PC-9 (cell line): ENCODE measurements at regions of chr5 and their contacts with region 1.

Region 1: DNA sequence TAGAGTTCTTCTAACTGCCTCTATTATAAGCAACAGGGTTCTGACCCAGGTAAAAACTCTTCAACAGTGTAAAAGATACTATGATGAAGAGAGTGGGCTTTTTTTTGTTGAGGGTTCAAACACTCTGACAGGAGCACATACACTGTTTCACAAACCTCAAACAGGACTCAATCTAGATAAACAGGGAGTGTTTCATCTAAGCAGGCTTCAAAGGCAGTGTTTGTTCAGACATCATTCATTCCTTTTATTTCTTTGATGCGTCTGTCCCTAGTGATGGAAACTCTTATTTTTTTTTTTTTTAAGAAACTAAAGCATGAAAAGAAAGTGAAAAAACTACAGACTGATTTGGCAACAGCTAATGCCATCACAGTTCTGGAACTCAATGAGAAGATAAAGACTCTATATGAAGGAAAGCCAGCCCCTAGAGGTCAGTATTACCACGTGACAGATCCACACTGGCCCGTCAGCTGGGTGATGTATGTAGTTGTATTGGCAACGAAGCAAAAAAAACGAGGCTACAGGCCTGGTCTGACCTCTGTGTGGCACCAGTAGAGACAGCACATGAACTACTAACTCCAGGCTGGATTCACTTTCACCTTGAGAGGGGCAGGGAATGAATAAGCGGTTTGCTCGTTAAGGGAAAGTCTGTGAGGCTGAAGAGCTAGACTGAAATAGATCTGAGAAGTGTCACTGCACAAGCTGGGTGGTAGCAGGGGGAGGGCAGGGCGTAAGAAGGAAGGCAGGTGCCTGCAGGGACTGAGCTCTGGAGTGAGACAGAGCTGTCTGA is 172.2 kb downstream of the CCDC192 start:
- DNase-seq: peak; percentile 67 to 84
- H3K4me3 ChIP-seq: no peak overlapping the region
- H3K27ac ChIP-seq: peak overlapping the region; percentile 23
- H3K4me1 ChIP-seq: peaks cover 27% of the 10 kb centered on the region
- H3K27me3 ChIP-seq: no peaks in the 10 kb centered on the region
- CTCF ChIP-seq: peak; percentile 49; the same call in 1 of the 2 replicates

Region 2: GRCh38 chr5:127757576-127757975 is 117.9 kb before region 1 on chr5:
- CTCF ChIA-PET with region 1: interaction called, 4 read pairs
- POLR2A ChIA-PET with region 1: no interaction called
- intact Hi-C with region 1: loop called (anchors 2 kb)
- DNase-seq: peak; percentile 15 to 45
- H3K4me3 ChIP-seq: no peak overlapping the region
- H3K27ac ChIP-seq: no peak overlapping the region
- H3K4me1 ChIP-seq: no peaks in the 10 kb centered on the region
- H3K27me3 ChIP-seq: no peaks in the 10 kb centered on the region
- CTCF ChIP-seq: peak; percentile 72

Region 3: DNA sequence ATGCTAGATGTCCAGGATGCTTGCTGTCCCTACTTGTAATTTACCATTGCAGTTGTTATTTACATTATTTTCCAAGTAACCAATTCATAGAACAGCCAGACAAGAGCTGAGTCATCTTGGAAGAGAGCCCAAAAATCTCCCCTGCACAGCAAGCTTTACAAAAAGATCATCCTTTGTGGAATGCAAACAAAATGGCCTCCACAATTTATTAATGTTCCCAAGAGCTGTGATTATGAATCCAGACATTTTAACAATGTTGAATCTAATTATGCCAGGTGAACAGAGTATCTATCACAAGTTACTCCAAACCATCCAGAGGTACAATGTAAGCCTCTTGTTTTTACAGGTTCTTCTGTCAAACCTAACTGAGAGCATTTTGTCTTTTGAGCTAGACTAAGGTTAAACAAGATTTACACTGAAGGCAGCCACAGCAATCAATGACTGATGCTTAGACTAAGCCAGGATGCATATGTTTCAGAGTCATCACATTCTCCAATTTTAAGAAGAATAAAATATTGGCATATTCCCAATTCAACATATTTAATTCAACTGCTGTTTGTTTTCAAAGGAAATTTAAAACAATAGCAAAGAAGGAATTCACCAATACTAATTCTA is 112.8 kb after region 1 on chr5:
- CTCF ChIA-PET with region 1: no interaction called
- POLR2A ChIA-PET with region 1: no interaction called
- intact Hi-C with region 1: loop called (anchors 5 kb)
- DNase-seq: peak; percentile 53 to 81
- H3K4me3 ChIP-seq: no peak overlapping the region
- H3K27ac ChIP-seq: peak overlapping the region; percentile 49
- H3K4me1 ChIP-seq: peaks cover 14% of the 10 kb centered on the region
- H3K27me3 ChIP-seq: no peaks in the 10 kb centered on the region
- CTCF ChIP-seq: no peak

Region 4: DNA sequence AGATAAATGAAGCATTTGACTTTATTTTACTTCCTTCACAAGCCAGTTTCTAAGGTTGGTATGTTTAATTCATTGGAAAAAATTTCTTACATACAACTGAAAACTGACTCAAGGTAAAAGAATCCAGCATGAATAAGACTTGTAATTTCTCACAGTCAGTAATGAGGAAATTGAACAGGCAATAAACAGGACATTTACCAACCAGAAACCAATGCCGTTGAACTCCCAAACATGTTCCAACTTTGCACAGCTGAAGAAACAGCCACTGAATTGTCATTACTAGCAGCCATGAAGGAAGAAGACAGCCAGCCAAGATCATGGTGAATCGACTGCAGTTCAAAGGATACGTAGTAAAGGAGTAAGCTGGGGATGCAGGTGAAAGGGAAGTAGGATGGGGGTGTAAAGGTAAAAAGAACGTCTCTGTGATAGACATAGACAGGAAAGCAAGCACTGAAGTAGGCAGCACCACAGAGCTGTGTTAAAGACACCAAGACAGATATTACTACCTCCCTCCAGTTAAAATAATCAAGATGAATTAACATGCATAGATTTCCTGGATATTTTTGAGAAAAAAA is 186.8 kb after region 1 on chr5:
- CTCF ChIA-PET with region 1: no interaction called
- POLR2A ChIA-PET with region 1: no interaction called
- intact Hi-C with region 1: loop called (anchors 1 kb)
- DNase-seq: peak in 1 of 2 experiments; percentile 86
- H3K4me3 ChIP-seq: no peak overlapping the region
- H3K27ac ChIP-seq: peak overlapping the region; percentile 68
- H3K4me1 ChIP-seq: peaks cover 13% of the 10 kb centered on the region
- H3K27me3 ChIP-seq: no peaks in the 10 kb centered on the region
- CTCF ChIP-seq: no peak

Region 5: DNA sequence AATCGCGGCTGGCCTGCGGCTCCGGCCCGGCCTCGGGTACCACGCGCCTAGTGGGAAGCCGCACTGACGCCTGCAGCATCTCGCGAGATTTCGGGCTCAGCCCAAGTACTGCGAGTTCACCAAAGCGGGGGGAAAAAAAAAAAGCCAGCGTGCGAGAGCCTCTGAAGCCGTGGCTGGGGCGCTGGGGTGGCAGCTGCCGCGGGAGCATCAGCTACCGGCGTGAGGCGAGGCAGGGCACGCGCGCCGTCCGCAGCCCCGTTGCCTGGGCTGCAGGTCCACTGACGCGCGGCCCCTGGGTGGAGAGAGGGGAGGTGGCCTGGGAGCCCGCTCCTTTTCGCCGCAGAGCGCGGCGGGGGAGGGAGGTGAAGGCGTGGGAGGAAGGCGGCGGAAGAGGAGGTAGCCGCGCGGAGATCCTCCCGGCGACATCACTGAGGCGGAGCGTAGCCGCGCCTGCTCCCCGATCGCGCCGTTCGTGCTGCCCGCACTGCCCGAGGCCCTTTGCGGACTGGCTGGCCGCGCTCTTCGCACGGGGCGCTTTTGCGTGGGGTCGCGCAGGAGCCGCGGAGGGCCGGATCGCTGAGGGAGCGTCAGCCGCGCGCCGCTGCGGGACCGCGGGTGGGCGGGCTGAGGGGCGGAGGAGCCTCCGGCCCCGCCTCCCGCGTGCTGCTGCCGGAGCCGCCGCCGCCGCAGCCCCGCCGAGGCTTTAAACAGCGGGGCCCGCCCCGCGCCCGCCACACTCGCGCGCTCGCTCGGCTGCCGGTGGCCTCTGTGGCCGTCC is 207.8 kb after region 1 on chr5 and contains the start of gene SLC12A2:
- CTCF ChIA-PET with region 1: interaction called, 6 read pairs
- POLR2A ChIA-PET with region 1: interaction called, 3 read pairs
- intact Hi-C with region 1: loop called (anchors 1 kb)
- DNase-seq: peak; percentile 87 to 88
- H3K4me3 ChIP-seq: peak within 1 kb of the TSS; percentile 97
- H3K27ac ChIP-seq: peak within 1 kb of the TSS; percentile 71
- H3K4me1 ChIP-seq: peaks cover 60% of the 10 kb centered on the region
- H3K27me3 ChIP-seq: no peaks in the 10 kb centered on the region
- CTCF ChIP-seq: no peak
- total RNA-seq, gene SLC12A2: 24.4 and 29.3 TPM in 2 replicates

Region 6: GRCh38 chr5:128201065-128201926 is 325.9 kb after region 1 on chr5:
- CTCF ChIA-PET with region 1: interaction called, 4 read pairs
- POLR2A ChIA-PET with region 1: no interaction called
- intact Hi-C with region 1: loop called (anchors 1 kb)
- DNase-seq: peak; percentile 86 to 91
- H3K4me3 ChIP-seq: peak overlapping the region; percentile 44; the same call in 1 of the 2 replicates
- H3K27ac ChIP-seq: peak overlapping the region; percentile 99
- H3K4me1 ChIP-seq: peaks cover 50% of the 10 kb centered on the region
- H3K27me3 ChIP-seq: no peaks in the 10 kb centered on the region
- CTCF ChIP-seq: peak; percentile 90